Activated CD4-positive, alpha-beta T cell treated with anti-CD3 and anti-CD28 coated beads, Interleukin-2, amount 10 ng/mL, durations not matched to agents 24 days and 14 days (primary cell): ENCODE measurements at regions of chr2 and their contacts with region 1.

Region 1: DNA sequence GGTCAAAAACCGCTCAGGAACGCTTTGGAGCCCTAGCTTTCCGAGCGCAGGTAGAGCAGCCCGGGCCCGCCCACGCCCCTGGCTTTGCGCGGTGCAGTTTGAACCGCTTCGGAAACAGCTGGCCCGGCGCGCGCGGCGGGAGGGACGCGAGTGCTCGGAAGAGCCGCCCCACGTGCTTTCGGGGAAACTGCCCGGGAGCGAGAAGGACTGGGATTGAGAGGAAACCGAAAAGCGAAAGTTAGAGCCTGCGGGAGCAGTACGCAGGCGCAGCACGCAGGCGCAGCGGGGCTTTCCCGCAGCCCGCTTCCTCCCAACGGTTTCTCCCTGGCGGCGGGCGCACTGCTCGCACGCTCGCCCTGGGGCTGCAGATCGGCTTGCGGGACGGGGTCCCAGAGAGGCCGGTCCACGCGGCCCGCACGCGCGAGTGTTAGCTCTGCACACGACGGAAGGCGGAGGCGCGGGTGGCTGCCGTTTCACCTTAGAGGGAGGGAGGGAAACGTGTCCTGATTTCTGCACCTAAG is 6.3 kb upstream of the STAT1 start:
- DNase-seq: peak; percentile 99
- H3K4me3 Mint-ChIP-seq: no peak overlapping the region
- H3K27ac Mint-ChIP-seq: no peak overlapping the region
- H3K4me1 Mint-ChIP-seq: peaks cover 31% of the 10 kb centered on the region
- H3K27me3 Mint-ChIP-seq: peaks cover 2% of the 10 kb centered on the region

Region 2: DNA sequence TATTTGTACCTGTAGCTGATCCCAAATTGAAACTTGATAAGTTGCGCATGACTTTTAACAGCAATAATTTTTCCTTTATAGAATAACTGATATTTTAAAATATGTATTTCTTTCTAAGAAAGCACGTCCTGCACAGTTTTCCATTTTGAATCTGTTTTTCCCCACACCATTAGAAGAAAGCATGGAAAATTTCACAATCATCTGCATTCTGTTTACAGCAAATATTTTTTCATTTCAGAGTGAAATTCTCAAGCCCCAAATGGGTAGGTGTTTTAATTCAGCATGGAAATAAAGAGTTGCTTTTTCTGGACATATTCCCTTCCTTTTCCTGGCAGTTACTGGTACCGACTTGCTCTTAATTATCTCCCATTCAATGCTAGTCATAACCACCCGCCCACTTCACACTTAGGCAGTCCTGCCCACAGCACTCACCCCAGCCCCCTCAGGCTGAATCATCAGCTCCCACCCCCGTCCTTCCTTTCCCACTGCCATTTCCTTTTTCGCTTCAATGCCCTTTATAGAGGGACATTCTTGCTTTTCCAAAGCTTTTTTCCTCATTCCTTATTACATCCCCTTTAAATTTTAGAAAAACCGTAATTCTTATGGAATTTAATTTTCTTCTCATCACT is 228.8 kb before region 1 on chr2:
- intact Hi-C with region 1: loop called (anchors 5 kb)
- DNase-seq: no peak
- H3K4me3 Mint-ChIP-seq: peak overlapping the region; percentile 53
- H3K27ac Mint-ChIP-seq: peak overlapping the region; percentile 86
- H3K4me1 Mint-ChIP-seq: peaks cover 66% of the 10 kb centered on the region
- H3K27me3 Mint-ChIP-seq: no peaks in the 10 kb centered on the region

Region 3: DNA sequence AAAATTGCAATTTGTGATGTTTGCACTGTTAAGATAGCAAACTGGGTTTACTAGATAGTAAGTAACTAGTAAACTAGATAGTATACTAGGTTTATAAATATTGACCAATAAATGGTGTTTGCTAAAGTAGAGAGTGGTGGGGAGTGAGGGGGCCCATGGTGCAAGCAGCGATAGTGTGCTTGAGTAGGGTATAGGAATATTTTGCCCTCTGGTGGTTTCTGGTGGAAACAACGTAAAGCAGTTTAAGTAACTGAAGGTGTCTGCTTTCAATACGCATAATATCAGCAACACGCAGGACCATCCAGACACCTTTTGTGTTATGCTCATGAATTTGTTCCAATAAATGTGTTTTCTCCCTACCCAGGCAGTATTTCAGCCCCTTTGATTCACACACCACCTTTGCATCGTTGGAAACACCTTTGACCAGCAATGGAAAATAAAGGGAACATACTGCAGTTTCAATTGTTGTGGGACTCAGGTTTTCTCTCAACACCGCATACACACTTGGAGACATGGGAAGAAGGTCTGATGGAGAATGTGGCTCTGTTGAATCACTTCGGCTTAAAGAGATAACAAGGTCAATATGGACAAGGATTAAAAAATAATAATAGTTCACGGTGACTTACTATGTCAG is 10.4 kb after region 1 on chr2:
- intact Hi-C with region 1: loop called (anchors 1 kb)
- DNase-seq: peak; percentile 86
- H3K4me3 Mint-ChIP-seq: peak overlapping the region; percentile 21
- H3K27ac Mint-ChIP-seq: peak overlapping the region; percentile 18
- H3K4me1 Mint-ChIP-seq: peaks cover 44% of the 10 kb centered on the region
- H3K27me3 Mint-ChIP-seq: no peaks in the 10 kb centered on the region

Region 4: GRCh38 chr2:191066197-191066918 is 46.1 kb after region 1 on chr2:
- intact Hi-C with region 1: loop called (anchors 2 kb)
- DNase-seq: peak; percentile 75
- H3K4me3 Mint-ChIP-seq: peak overlapping the region; percentile 88
- H3K27ac Mint-ChIP-seq: peak overlapping the region; percentile 92
- H3K4me1 Mint-ChIP-seq: peaks cover 76% of the 10 kb centered on the region
- H3K27me3 Mint-ChIP-seq: no peaks in the 10 kb centered on the region

Region 5: GRCh38 chr2:191150600-191151330 is 130.5 kb after region 1 on chr2 and contains the start of gene STAT4:
- intact Hi-C with region 1: loop called (anchors 1 kb)
- DNase-seq: peak; percentile 94
- H3K4me3 Mint-ChIP-seq: peak within 1 kb of the TSS; percentile 91
- H3K27ac Mint-ChIP-seq: peak within 1 kb of the TSS; percentile 92
- H3K4me1 Mint-ChIP-seq: peaks cover 65% of the 10 kb centered on the region
- H3K27me3 Mint-ChIP-seq: no peaks in the 10 kb centered on the region
- total RNA-seq, gene STAT4: 47.9 and 50.8 TPM in 2 replicates

Region 6: GRCh38 chr2:191255756-191256312 is 235.6 kb after region 1 on chr2:
- intact Hi-C with region 1: no loop called
- DNase-seq: no peak
- H3K4me3 Mint-ChIP-seq: no peak overlapping the region
- H3K27ac Mint-ChIP-seq: no peak overlapping the region
- H3K4me1 Mint-ChIP-seq: peaks cover 1% of the 10 kb centered on the region
- H3K27me3 Mint-ChIP-seq: peaks cover 6% of the 10 kb centered on the region